ENCODE measurements at regions of chr6 and their contacts with region 1.

Region 1: GRCh38 chr6:157221007-157221816 is 102.1 kb downstream of the TMEM242 start:
- DNase-seq: peak; percentile 95 to 96
- H3K4me3 ChIP-seq: peak overlapping the region; percentile 36 to 50 (median 38)
- H3K27ac ChIP-seq: peak overlapping the region in 4 of 5 donors; percentile 30 to 55 (median 39)
- H3K4me1 ChIP-seq: peaks cover 0 to 40% (median 16%) of the 10 kb centered on the region in 4 donors
- H3K27me3 ChIP-seq: no peaks in the 10 kb centered on the region
- CTCF ChIP-seq: peak in 1 of 7 experiments; percentile 13
- EP300 ChIP-seq: peak; percentile 8
- POLR2A ChIP-seq: no peak

Region 2: GRCh38 chr6:157274471-157275226 is 53.4 kb after region 1 on chr6:
- intact Hi-C with region 1: loop called (anchors 10 kb)
- DNase-seq: peak; percentile 74 to 94
- H3K4me3 ChIP-seq: peak overlapping the region; percentile 63 to 74 (median 70)
- H3K27ac ChIP-seq: peak overlapping the region; percentile 71 to 91 (median 82)
- H3K4me1 ChIP-seq: peaks cover 9 to 23% (median 17%) of the 10 kb centered on the region in 4 donors
- H3K27me3 ChIP-seq: no peaks in the 10 kb centered on the region
- CTCF ChIP-seq: peak in 3 of 7 experiments; percentile 80 to 95 (median 89)
- EP300 ChIP-seq: no peak
- POLR2A ChIP-seq: no peak

Measured in stomach (tissue), 19 donors.